Cardiac septum (tissue), 1 donor: ENCODE measurements at regions of chr17 and their contacts with region 1.

Region 1: GRCh38 chr17:67862614-67863217 is 37.4 kb downstream of the BPTF start:
- DNase-seq: no peak

Region 2: GRCh38 chr17:67813803-67814180 is 48.9 kb before region 1 on chr17:
- intact Hi-C with region 1: no loop called
- DNase-seq: no peak

Region 3: DNA sequence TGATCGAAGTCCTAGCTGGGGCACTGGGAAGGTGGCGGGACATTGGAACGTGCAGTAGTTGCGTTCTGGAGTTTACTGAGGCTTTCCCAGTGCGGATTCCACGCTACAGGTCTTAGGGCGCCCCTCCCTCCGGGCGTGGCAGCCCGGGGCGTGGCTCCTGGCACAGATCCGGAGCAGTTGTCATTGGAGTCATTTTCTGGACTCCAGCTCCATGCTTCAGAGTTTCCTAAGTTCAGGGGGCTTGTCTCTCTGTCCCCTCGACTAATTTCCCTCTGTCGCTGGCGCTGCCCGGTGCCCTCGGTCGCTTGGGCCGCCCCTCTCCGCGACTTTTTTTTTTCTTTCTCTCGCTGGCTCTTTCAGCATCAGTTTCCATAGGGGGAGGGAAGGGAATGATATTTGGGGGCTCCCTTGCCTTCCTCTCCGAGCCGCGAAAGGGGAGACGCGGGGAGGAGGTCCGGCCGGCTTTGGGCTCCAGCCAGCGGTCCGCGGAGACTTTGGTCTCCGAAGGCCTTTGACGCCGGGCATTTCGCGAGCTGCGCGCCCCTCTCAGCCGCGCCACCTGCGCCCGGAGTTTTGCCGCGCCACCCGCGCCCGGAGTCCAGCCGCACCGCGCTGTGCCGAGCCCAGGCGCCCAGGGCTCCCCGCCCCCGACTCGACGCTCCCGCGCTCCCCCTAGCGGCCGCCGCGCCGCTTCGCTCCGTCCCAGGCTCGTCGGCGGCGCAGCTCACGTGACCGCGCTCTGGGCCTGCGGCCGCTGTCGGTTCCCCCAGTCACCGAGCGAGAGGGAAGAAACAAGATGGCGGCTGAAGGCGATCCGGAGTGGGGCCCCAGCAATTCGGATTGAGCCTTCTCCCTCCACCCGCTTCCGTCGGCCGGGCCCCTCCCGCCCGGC is 37.7 kb before region 1 on chr17 and contains the start of gene BPTF:
- intact Hi-C with region 1: loop called (anchors 5 kb)
- DNase-seq: peak; percentile 97
- total RNA-seq, gene BPTF: 72.9 TPM